ENCODE measurements at regions of chr12 and their contacts with region 1.

Region 1: DNA sequence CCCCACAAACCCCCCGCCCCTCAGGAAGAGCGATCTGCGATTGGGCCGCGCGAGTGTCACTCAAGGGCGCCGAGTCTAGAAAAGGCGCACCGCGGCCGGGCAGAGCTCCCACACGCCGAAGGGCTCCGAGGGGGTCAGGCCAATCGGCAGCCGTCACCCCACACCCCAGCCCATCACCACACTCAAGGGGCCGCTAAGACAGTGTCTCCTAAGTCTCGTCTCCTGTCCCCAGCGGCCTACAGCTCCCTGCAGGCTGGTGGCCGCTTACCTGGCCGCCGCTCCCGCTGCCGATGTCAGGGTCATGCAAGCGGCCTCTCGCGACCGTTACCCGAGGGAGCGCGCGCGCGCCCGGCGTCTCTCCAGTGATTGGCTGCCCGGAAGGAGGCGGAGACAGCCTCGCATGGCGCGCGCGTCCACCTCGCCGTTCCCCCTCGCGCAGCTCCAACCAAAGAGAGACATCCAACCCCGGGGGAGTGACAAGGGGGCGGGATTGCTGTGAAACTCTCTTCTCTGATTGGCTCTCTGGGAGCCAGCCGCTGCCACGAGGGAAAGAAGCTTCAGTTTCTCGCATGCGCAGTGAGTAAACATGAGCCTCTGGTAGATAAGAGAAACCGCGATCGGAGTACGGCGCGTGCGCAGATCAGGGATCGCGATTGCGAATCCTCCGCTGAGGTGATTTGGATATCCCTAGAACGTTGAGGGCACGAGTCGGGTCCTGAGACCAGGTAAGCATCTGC is at the starts of genes MPHOSPH9 and MTRFR:
- DNase-seq: peak; percentile 97 to 100 (median 100)
- H3K4me3 ChIP-seq: peak within 1 kb of the TSS; percentile 91
- H3K4me3 Mint-ChIP-seq: peak within 1 kb of the TSS; percentile 92 to 100 (median 99)
- H3K27ac ChIP-seq: peak within 1 kb of the TSS; percentile 91
- H3K27ac Mint-ChIP-seq: peak within 1 kb of the TSS; percentile 93 to 99 (median 98)
- H3K4me1 ChIP-seq: peaks cover 78% of the 10 kb centered on the region
- H3K4me1 Mint-ChIP-seq: peaks cover 62 to 90% (median 89%) of the 10 kb centered on the region in 3 donors
- H3K27me3 ChIP-seq: no peaks in the 10 kb centered on the region
- H3K27me3 Mint-ChIP-seq: peaks cover 0 to 2% of the 10 kb centered on the region in 2 donors
- total RNA-seq, gene MPHOSPH9: 67.3 to 74.8 TPM
- total RNA-seq, gene MTRFR: 26.6 TPM

Region 2: DNA sequence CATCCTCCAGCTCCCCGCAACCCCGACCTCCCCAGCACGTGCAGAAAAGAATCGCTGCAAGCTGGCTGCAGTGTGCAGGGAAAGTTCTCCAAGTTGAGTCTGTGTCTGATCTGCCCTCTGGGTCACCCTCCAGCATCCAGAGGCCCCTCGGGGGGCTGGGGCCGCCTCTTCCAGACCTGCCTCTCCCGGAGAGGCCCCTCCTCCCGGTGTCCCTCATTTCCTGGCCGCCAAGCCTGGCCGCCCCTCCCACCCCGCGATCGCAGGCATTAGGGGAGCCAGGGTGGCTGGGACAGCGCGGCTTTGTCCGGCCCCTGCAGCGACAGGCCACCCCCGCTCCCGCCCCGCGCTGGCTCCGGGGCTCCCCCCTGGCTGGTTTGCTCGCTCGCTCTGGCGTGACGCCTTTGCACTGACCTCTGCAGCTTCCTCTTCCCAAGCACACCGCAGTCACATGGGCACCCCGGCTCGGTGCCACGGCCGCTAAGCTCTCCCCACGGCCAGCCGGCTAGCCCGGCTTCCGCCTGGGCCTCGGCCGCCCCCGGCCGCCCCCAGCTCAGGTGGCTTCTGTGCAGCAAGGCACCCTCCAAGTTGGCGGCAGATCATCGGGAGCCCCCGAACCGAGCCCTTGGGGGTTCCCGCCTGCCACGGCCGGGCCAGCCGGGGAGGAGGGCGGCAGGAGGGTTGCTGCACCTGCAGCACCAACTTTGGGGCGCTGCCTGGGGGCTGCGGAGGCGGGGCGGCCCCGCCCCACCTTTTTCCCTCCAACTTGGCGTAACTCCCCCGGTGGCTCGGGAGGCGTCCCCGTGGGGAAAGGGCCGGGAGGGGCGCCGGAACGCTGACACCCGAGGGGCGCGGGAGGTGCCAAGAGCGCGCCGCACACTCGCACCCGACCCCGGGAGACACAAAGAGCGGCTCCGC is 1695.8 kb before region 1 on chr12:
- CTCF ChIA-PET with region 1: no interaction called
- POLR2A ChIA-PET with region 1: interaction called, 12 read pairs
- DNase-seq: peak; percentile 47 to 73 (median 59)
- H3K4me3 ChIP-seq: peak overlapping the region; percentile 55
- H3K4me3 Mint-ChIP-seq: peak overlapping the region; percentile 75 to 92 (median 79)
- H3K27ac ChIP-seq: peak overlapping the region; percentile 62
- H3K27ac Mint-ChIP-seq: peak overlapping the region; percentile 84 to 99 (median 97)
- H3K4me1 ChIP-seq: peaks cover 42% of the 10 kb centered on the region
- H3K4me1 Mint-ChIP-seq: peaks cover 47 to 60% (median 50%) of the 10 kb centered on the region in 3 donors
- H3K27me3 ChIP-seq: no peaks in the 10 kb centered on the region
- H3K27me3 Mint-ChIP-seq: no peaks in the 10 kb centered on the region

Region 3: GRCh38 chr12:122691575-122691965 is 541.4 kb before region 1 on chr12:
- CTCF ChIA-PET with region 1: no interaction called
- POLR2A ChIA-PET with region 1: no interaction called
- DNase-seq: no peak
- H3K4me3 ChIP-seq: no peak overlapping the region
- H3K4me3 Mint-ChIP-seq: peak overlapping the region in 2 of 7 donors; percentile 1 to 4
- H3K27ac ChIP-seq: no peak overlapping the region
- H3K27ac Mint-ChIP-seq: peak overlapping the region in 2 of 8 donors; percentile 19 to 42
- H3K4me1 ChIP-seq: no peaks in the 10 kb centered on the region
- H3K4me1 Mint-ChIP-seq: peaks cover 0 to 5% (median 0%) of the 10 kb centered on the region in 3 donors
- H3K27me3 ChIP-seq: no peaks in the 10 kb centered on the region
- H3K27me3 Mint-ChIP-seq: no peaks in the 10 kb centered on the region

Region 4: GRCh38 chr12:123043536-123044001 is 189.4 kb before region 1 on chr12:
- CTCF ChIA-PET with region 1: interaction called, 53 read pairs
- POLR2A ChIA-PET with region 1: interaction called, 11 read pairs
- DNase-seq: peak; percentile 31 to 78 (median 64)
- H3K4me3 ChIP-seq: no peak overlapping the region
- H3K4me3 Mint-ChIP-seq: peak overlapping the region in 4 of 7 donors; percentile 15 to 46 (median 28)
- H3K27ac ChIP-seq: no peak overlapping the region
- H3K27ac Mint-ChIP-seq: peak overlapping the region; percentile 66 to 88 (median 77)
- H3K4me1 ChIP-seq: peaks cover 16% of the 10 kb centered on the region
- H3K4me1 Mint-ChIP-seq: peaks cover 21 to 25% (median 24%) of the 10 kb centered on the region in 3 donors
- H3K27me3 ChIP-seq: no peaks in the 10 kb centered on the region
- H3K27me3 Mint-ChIP-seq: peaks cover 0 to 3% of the 10 kb centered on the region in 2 donors

Region 5: DNA sequence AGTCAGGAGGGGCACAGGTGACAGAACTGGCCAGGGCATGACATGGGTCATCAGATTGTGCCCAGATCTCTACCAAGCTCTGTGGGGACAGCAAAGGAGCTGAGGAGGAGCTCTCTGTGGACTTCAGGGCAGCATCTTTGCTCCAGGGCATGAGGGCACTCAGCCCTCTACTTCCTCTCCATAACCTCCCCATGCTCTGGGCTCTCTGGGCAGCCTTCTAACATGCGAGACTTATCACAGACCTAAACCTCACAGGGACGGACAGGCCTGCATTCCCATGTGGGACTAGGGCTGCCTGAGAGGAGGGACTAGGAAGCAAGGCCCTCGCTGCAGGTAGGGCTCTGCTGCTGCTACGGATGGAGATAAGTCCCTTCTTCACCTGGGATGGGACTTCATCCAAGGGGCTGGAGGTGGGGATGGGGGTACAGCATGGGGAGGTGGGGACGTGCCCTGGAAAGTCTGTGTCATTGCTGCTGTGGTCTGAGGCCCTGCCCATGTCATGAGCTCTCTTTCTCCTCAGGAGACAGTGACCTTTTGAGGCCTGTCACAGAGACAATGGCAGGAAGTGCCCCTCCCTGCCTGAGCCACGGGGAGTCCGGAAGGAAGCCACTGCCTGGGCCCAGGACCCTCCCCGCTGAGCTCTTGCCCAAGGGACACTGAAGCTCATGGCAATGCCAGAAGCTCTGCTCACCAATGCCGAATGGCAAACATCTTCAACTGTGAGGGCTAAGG is 126.2 kb before region 1 on chr12:
- CTCF ChIA-PET with region 1: interaction called, 5 read pairs
- POLR2A ChIA-PET with region 1: interaction called, 15 read pairs
- DNase-seq: peak; percentile 10 to 79 (median 35)
- H3K4me3 ChIP-seq: peak overlapping the region; percentile 47
- H3K4me3 Mint-ChIP-seq: peak overlapping the region in 6 of 7 donors; percentile 61 to 89 (median 74)
- H3K27ac ChIP-seq: peak overlapping the region; percentile 20
- H3K27ac Mint-ChIP-seq: peak overlapping the region; percentile 84 to 98 (median 94)
- H3K4me1 ChIP-seq: peaks cover 43% of the 10 kb centered on the region
- H3K4me1 Mint-ChIP-seq: peaks cover 41 to 56% (median 44%) of the 10 kb centered on the region in 3 donors
- H3K27me3 ChIP-seq: no peaks in the 10 kb centered on the region
- H3K27me3 Mint-ChIP-seq: peaks cover 0 to 4% of the 10 kb centered on the region in 2 donors

Region 6: GRCh38 chr12:123250484-123251383 is 17.8 kb after region 1 on chr12:
- CTCF ChIA-PET with region 1: interaction called, 10 read pairs
- POLR2A ChIA-PET with region 1: interaction called, 8 read pairs
- DNase-seq: no peak
- H3K4me3 ChIP-seq: no peak overlapping the region
- H3K4me3 Mint-ChIP-seq: peak overlapping the region in 2 of 7 donors; percentile 0 to 65
- H3K27ac ChIP-seq: peak overlapping the region; percentile 27
- H3K27ac Mint-ChIP-seq: peak overlapping the region; percentile 5 to 96 (median 66)
- H3K4me1 ChIP-seq: peaks cover 24% of the 10 kb centered on the region
- H3K4me1 Mint-ChIP-seq: peaks cover 45 to 69% (median 51%) of the 10 kb centered on the region in 3 donors
- H3K27me3 ChIP-seq: no peaks in the 10 kb centered on the region
- H3K27me3 Mint-ChIP-seq: no peaks in the 10 kb centered on the region